ENCODE measurements at regions of chr10 and their contacts with region 1.

Region 1: DNA sequence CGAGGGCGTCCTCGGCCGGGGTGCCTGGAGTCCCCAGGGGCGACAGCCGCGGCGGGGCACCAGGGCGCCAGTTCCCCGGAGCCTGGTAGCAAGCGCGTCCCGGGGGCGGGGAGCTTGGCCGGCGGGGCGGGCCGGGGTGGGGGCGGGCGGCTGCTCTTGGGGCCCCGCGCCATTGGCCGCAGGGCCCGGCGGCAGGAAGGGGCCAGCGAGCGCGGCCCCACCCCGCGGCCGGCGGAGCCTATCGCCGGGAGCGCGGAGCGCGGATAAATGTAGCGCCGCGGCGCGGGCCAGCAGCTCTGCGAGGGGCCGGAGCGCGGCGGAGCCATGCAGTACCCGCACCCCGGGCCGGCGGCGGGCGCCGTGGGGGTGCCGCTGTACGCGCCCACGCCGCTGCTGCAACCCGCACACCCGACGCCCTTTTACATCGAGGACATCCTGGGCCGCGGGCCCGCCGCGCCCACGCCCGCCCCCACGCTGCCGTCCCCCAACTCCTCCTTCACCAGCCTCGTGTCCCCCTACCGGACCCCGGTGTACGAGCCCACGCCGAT is at the start of gene HHEX:
- DNase-seq: peak; percentile 80
- H3K4me3 ChIP-seq: peak within 1 kb of the TSS; percentile 54 to 98 (median 91)
- H3K27ac ChIP-seq: peak within 1 kb of the TSS; percentile 92
- H3K4me1 ChIP-seq: peaks cover 31% of the 10 kb centered on the region
- H3K27me3 ChIP-seq: no peaks in the 10 kb centered on the region
- CTCF ChIP-seq: no peak
- POLR2A ChIP-seq: peak; percentile 98
- total RNA-seq, gene HHEX: 109 and 110 TPM in 2 replicates

Region 2: GRCh38 chr10:92517034-92517655 is 172.6 kb before region 1 on chr10:
- CTCF ChIA-PET with region 1: interaction called, 22 read pairs
- POLR2A ChIA-PET with region 1: no interaction called
- dilution Hi-C with region 1: no loop called
- intact Hi-C with region 1: loop called (anchors 1 kb)
- DNase-seq: peak; percentile 80
- H3K4me3 ChIP-seq: no peak overlapping the region
- H3K27ac ChIP-seq: no peak overlapping the region
- H3K4me1 ChIP-seq: no peaks in the 10 kb centered on the region
- H3K27me3 ChIP-seq: no peaks in the 10 kb centered on the region
- CTCF ChIP-seq: peak; percentile 67 to 73
- POLR2A ChIP-seq: no peak

Region 3: DNA sequence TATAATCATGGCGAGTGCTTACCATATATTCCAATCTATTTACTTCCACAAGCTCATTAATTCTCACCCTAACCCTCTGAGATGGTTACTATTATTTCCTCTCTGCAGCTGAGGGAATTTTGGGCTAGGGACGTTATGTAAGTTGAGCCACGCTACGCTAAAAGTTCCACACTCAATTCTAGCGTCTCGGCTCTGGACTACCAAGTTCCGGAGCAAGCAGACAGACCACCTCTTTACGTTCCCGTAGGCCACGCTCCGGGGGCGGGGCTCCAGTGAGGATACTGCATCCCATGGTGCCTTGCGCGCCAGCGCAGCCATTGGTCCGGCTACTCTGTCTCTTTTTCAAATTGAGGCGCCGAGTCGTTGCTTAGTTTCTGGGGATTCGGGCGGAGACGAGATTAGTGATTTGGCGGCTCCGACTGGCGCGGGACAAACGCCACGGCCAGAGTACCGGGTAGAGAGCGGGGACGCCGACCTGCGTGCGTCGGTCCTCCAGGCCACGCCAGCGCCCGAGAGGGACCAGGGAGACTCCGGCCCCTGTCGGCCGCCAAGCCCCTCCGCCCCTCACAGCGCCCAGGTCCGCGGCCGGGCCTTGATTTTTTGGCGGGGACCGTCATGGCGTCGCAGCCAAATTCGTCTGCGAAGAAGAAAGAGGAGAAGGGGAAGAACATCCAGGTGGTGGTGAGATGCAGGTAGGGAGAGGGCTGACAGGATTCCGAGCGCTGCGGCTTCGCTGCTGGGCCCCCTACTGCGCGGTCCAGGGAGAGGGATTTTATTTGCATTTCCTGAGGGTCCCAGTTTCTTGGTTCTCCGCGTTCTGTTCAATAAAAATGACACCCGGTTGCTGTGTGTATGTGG is 96.7 kb before region 1 on chr10 and contains the start of gene KIF11:
- CTCF ChIA-PET with region 1: interaction called, 11 read pairs
- POLR2A ChIA-PET with region 1: no interaction called
- dilution Hi-C with region 1: no loop called
- intact Hi-C with region 1: loop called (anchors 1 kb)
- DNase-seq: peak; percentile 98
- H3K4me3 ChIP-seq: peak within 1 kb of the TSS; percentile 75 to 95 (median 93)
- H3K27ac ChIP-seq: peak within 1 kb of the TSS; percentile 83
- H3K4me1 ChIP-seq: peaks cover 33% of the 10 kb centered on the region
- H3K27me3 ChIP-seq: no peaks in the 10 kb centered on the region
- CTCF ChIP-seq: no peak
- POLR2A ChIP-seq: peak; percentile 96
- total RNA-seq, gene KIF11: 42.6 and 42.8 TPM in 2 replicates

Region 4: DNA sequence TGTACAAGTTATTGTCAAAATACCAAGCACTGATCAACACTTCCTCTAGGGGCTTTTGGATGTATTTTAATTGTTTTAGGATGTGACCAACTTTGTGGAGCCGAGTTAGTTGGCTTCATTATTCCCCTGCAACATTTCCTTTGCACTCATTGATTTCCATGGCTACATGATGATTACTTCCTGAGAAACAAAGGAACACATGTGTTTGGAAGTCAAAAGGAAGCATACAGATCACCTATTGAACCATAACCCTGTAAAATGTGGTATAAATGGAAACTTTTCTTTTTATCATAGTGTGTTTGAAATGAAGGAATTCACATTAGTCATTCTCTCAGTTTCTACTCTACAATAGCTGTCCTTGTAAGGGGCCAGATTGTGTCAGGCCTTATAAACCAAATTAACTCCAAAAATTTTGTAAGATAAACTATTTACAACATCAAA is 126.4 kb after region 1 on chr10:
- CTCF ChIA-PET with region 1: interaction called, 61 read pairs
- POLR2A ChIA-PET with region 1: interaction called, 24 read pairs
- dilution Hi-C with region 1: no loop called
- intact Hi-C with region 1: loop called (anchors 1 kb)
- DNase-seq: peak; percentile 99
- H3K4me3 ChIP-seq: no peak overlapping the region
- H3K27ac ChIP-seq: peak overlapping the region; percentile 81
- H3K4me1 ChIP-seq: peaks cover 63% of the 10 kb centered on the region
- H3K27me3 ChIP-seq: no peaks in the 10 kb centered on the region
- CTCF ChIP-seq: peak in 1 of 2 donors; percentile 29
- POLR2A ChIP-seq: peak; percentile 45

Region 5: DNA sequence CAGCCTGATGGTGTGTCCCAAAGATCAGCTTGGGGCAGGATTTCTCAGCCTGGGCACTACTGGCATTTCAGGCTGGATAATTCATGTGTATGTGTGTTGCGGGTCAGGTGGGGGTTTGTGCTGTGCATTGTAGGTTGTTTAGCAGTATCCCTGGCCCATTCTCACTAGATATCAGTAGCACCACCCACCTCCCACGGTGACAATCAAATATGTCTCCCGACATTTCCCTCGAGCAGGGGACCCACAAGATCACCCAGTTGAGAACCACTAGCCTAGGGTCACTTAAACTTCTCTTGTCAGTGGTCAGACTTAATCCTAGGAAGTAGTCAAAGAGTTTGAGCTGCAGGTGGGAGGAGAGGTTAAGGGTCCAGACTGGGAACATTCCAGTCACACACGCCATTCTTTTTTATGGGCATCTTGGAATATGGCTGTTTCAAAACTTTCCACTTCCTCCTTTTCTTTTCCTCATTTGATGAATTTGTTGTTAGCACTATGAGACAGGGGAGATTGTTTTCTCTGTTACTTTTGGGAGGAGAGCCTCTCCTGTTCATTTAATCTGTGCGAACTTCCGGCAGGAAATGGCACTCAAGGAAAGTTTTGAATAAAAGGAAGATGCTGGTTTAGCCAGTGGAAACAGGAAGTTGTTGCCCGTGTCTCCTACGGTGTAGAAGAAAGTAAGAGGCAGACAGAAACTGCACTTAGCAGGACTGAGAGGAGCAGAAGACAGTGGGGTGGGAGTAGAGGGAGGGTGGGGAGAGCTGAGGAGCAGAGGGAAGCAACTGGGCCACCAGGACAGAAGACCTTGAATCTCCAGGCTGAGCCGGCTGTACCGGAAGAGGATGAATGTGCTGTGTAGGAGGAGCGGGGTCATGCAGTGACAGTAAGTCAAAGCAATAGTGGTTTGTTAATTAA is 141.0 kb after region 1 on chr10:
- CTCF ChIA-PET with region 1: interaction called, 26 read pairs
- POLR2A ChIA-PET with region 1: interaction called, 6 read pairs
- dilution Hi-C with region 1: no loop called
- intact Hi-C with region 1: loop called (anchors 2 kb)
- DNase-seq: peak; percentile 91
- H3K4me3 ChIP-seq: peak overlapping the region; percentile 19 to 91 (median 69)
- H3K27ac ChIP-seq: peak overlapping the region; percentile 91
- H3K4me1 ChIP-seq: peaks cover 63% of the 10 kb centered on the region
- H3K27me3 ChIP-seq: no peaks in the 10 kb centered on the region
- CTCF ChIP-seq: no peak
- POLR2A ChIP-seq: no peak

Region 6: GRCh38 chr10:92848441-92849233 is 158.9 kb after region 1 on chr10 and contains the start of gene EXOC6:
- CTCF ChIA-PET with region 1: interaction called, 28 read pairs
- POLR2A ChIA-PET with region 1: interaction called, 5 read pairs
- dilution Hi-C with region 1: no loop called
- intact Hi-C with region 1: no loop called
- DNase-seq: peak; percentile 86
- H3K4me3 ChIP-seq: peak within 1 kb of the TSS; percentile 77 to 85 (median 83)
- H3K27ac ChIP-seq: no peak within 1 kb of the TSS
- H3K4me1 ChIP-seq: peaks cover 28% of the 10 kb centered on the region
- H3K27me3 ChIP-seq: no peaks in the 10 kb centered on the region
- CTCF ChIP-seq: no peak
- POLR2A ChIP-seq: peak; percentile 77
- total RNA-seq, gene EXOC6: 103 and 108 TPM in 2 replicates

Region 7: DNA sequence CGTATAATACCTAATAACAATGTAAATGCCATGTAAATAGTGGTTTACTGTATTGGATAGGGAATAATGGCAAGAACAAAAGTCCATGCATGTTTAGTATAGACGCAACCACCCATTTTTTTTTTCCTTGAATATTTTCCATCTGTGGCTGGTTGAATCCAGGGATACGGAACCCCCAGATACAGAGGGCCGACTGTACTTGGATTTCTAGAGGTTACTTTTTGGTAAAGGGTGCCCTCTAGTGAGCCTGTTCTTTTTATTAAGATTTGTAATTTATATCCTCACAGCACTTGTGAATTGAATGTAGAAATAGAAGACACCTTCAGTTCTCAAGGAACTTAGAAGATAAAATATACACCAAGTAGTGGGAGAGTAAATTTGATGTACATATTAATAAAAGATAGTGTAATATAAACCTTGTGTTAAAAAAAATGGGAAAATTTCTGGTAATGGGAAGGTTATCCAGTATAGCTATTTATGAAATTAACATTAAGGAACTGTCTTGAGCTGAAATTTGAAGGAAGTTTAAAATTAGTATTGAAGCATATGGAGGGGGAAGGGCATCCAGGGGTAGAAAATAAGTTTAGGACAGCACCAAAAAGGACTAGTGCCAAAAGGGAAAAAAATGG is 190.6 kb after region 1 on chr10:
- CTCF ChIA-PET with region 1: interaction called, 6 read pairs
- POLR2A ChIA-PET with region 1: no interaction called
- dilution Hi-C with region 1: no loop called
- intact Hi-C with region 1: loop called (anchors 1 kb)
- DNase-seq: peak; percentile 74
- H3K4me3 ChIP-seq: no peak overlapping the region
- H3K27ac ChIP-seq: no peak overlapping the region
- H3K4me1 ChIP-seq: peaks cover 28% of the 10 kb centered on the region
- H3K27me3 ChIP-seq: no peaks in the 10 kb centered on the region
- CTCF ChIP-seq: peak; percentile 7 to 18
- POLR2A ChIP-seq: no peak

Region 8: GRCh38 chr10:93652857-93653256 is 963.1 kb after region 1 on chr10:
- CTCF ChIA-PET with region 1: no interaction called
- POLR2A ChIA-PET with region 1: no interaction called
- dilution Hi-C with region 1: no loop called
- intact Hi-C with region 1: no loop called
- DNase-seq: peak; percentile 41
- H3K4me3 ChIP-seq: no peak overlapping the region
- H3K27ac ChIP-seq: no peak overlapping the region
- H3K4me1 ChIP-seq: peaks cover 4% of the 10 kb centered on the region
- H3K27me3 ChIP-seq: no peaks in the 10 kb centered on the region
- CTCF ChIP-seq: no peak
- POLR2A ChIP-seq: no peak

Measured in endothelial cell of umbilical vein (primary cell).